ENCODE measurements at regions of chr3 and their contacts with region 1.

Region 1: GRCh38 chr3:16290007-16290826 is 25.2 kb downstream of the OXNAD1 start:
- DNase-seq: peak; percentile 81
- H3K4me3 Mint-ChIP-seq: peak overlapping the region; percentile 84
- H3K27ac Mint-ChIP-seq: peak overlapping the region; percentile 97
- H3K4me1 Mint-ChIP-seq: peaks cover 85% of the 10 kb centered on the region
- H3K27me3 Mint-ChIP-seq: no peaks in the 10 kb centered on the region

Region 2: DNA sequence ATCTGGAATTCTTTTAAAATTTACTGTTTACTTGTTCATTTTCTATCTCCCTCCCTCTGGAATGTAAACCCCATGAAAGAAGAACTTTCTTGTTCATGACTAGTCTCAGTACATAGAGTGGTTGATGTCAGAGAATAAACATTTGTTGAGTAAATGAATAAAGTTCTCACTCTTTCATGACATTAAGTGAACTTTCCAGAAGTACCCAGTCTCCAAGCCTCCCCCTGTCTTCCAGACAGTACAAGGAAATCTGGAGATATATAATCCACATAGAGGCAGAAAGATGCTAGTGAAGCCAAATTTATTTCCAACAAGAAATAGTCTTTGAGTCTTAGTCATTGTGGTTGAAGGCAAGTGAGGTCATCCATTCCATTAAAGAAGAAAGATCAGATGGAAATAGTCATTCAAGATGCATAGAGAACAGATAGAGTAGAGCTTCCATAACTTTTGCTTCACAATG is 187.3 kb before region 1 on chr3:
- CTCF ChIA-PET with region 1: no interaction called
- intact Hi-C with region 1: no loop called
- DNase-seq: no peak
- H3K4me3 Mint-ChIP-seq: no peak overlapping the region
- H3K27ac Mint-ChIP-seq: no peak overlapping the region
- H3K4me1 Mint-ChIP-seq: peaks cover 5% of the 10 kb centered on the region
- H3K27me3 Mint-ChIP-seq: peaks cover 16% of the 10 kb centered on the region

Region 3: DNA sequence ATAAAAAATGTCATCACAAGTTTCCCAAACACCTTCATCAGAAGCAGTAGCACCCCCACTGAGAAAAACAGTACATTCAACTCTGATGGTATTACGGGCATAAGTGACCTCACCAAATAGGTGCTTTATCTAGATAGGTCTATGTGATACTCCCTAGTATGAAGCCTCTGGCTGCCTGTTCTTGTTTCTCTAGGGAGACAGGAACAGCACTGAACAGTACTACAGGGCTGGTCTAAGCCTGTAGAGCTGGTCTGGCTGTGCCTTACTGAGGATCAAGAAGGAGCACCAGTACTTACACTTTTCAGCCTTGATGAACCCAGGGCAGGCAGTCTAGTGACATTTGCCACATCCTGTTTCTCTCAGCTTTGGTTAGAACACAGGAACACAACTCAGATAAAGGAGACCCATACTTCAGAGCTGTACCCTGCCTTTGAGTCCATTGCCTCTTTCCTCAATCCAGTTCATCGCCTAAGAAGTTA is 10.7 kb after region 1 on chr3:
- CTCF ChIA-PET with region 1: interaction called, 109 read pairs
- intact Hi-C with region 1: loop called (anchors 1 kb)
- DNase-seq: peak; percentile 58
- H3K4me3 Mint-ChIP-seq: peak overlapping the region; percentile 62
- H3K27ac Mint-ChIP-seq: peak overlapping the region; percentile 94
- H3K4me1 Mint-ChIP-seq: peaks cover 97% of the 10 kb centered on the region
- H3K27me3 Mint-ChIP-seq: no peaks in the 10 kb centered on the region

Region 4: GRCh38 chr3:16338999-16339398 is 48.8 kb after region 1 on chr3:
- CTCF ChIA-PET with region 1: interaction called, 11 read pairs
- intact Hi-C with region 1: loop called (anchors 1 kb)
- DNase-seq: peak; percentile 36
- H3K4me3 Mint-ChIP-seq: no peak overlapping the region
- H3K27ac Mint-ChIP-seq: peak overlapping the region; percentile 73
- H3K4me1 Mint-ChIP-seq: peaks cover 67% of the 10 kb centered on the region
- H3K27me3 Mint-ChIP-seq: no peaks in the 10 kb centered on the region

Region 5: DNA sequence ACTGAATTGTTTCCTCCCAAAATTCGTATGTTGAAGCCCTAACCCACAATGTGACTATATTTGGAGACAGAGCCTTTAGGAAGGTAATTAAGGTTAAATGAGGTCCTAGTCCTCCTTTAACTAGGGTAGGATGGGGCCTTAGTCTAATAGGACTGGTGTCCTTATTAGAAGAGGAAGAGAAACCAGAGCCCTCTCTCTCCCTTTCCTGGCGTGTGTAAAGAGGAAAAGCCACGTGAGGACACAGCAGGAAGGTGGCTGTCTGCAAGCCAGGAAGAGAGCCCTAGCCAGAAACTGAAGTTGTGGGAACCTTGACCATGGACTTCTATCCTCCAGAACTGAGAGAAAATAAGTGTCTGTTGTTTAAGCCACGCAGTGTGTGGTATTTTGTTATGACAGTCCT is 69.1 kb after region 1 on chr3:
- CTCF ChIA-PET with region 1: no interaction called
- intact Hi-C with region 1: no loop called
- DNase-seq: no peak
- H3K4me3 Mint-ChIP-seq: no peak overlapping the region
- H3K27ac Mint-ChIP-seq: peak overlapping the region; percentile 48
- H3K4me1 Mint-ChIP-seq: peaks cover 21% of the 10 kb centered on the region
- H3K27me3 Mint-ChIP-seq: no peaks in the 10 kb centered on the region

Region 6: GRCh38 chr3:16520970-16521881 is 231.0 kb after region 1 on chr3:
- CTCF ChIA-PET with region 1: interaction called, 4 read pairs
- intact Hi-C with region 1: loop called (anchors 1 kb)
- DNase-seq: peak; percentile 53
- H3K4me3 Mint-ChIP-seq: no peak overlapping the region
- H3K27ac Mint-ChIP-seq: peak overlapping the region; percentile 87
- H3K4me1 Mint-ChIP-seq: peaks cover 67% of the 10 kb centered on the region
- H3K27me3 Mint-ChIP-seq: no peaks in the 10 kb centered on the region

Region 7: DNA sequence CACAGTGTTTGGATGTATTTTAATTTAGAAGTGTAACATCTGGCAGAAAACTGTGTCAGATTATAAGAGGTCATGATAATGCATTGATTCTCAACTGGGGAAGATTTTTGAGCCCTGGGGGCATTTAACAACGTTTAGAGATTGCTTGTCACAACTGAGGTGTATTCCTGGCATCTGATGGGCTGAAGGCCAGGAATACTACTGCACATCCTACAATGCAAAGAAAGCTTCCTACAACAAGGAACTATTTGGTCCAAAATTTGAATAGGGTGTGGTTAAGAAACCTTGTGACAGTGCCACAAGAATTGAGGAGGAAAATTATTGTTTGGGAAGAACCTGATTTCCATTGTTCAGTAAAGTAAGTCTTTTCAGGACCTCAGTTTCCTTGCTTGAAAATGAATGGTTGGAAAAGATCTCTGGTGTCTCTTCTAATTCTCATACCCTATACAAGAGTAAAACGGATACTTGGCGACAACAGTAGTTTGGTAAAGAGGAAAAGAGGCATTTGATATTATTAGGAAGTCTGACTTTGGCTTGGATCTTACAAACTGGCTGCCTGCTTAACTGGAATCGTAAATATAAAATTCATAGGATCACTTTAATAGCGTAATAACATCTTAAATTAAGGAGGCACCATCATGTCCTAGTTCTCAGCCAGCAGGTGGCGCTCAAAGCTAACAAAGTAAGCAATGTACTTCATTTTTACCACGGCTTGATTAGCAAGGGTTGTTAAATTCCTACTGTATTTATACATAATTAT is 310.7 kb after region 1 on chr3:
- CTCF ChIA-PET with region 1: no interaction called
- intact Hi-C with region 1: loop called (anchors 1 kb)
- DNase-seq: peak; percentile 90
- H3K4me3 Mint-ChIP-seq: no peak overlapping the region
- H3K27ac Mint-ChIP-seq: no peak overlapping the region
- H3K4me1 Mint-ChIP-seq: peaks cover 19% of the 10 kb centered on the region
- H3K27me3 Mint-ChIP-seq: no peaks in the 10 kb centered on the region

Region 8: DNA sequence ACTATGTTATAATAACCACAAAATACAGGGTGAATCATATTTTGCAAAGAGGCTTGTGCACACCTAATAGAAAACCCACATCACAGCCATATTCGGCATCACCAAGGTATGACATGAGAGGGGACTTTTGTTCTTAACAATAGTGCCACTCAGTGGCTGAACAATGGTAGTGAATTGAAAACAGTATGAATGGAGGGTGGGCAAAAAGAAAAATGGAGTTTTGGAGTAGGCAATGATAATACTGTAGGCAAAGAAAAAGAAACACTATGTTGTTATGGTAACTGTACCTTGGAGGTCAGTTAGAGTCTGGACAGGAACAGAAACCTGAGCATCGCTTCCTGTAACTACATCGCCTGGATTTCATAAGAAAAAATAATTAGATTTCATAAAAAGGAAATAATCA is 943.2 kb after region 1 on chr3:
- CTCF ChIA-PET with region 1: no interaction called
- intact Hi-C with region 1: loop called (anchors 1 kb)
- DNase-seq: peak; percentile 51
- H3K4me3 Mint-ChIP-seq: no peak overlapping the region
- H3K27ac Mint-ChIP-seq: no peak overlapping the region
- H3K4me1 Mint-ChIP-seq: peaks cover 20% of the 10 kb centered on the region
- H3K27me3 Mint-ChIP-seq: no peaks in the 10 kb centered on the region